Activated naive CD4-positive, alpha-beta T cell treated with anti-CD3 and anti-CD28 coated beads for 36 hours (primary cell): ENCODE measurements at regions of chr11 and their contacts with region 1.

Region 1: GRCh38 chr11:10307442-10308207 is 2.8 kb downstream of the ADM start:
- DNase-seq: peak; percentile 87
- H3K4me3 Mint-ChIP-seq: peak overlapping the region; percentile 81
- H3K27ac Mint-ChIP-seq: peak overlapping the region; percentile 59
- H3K4me1 Mint-ChIP-seq: peaks cover 33% of the 10 kb centered on the region
- H3K27me3 Mint-ChIP-seq: peaks cover 41% of the 10 kb centered on the region

Region 2: DNA sequence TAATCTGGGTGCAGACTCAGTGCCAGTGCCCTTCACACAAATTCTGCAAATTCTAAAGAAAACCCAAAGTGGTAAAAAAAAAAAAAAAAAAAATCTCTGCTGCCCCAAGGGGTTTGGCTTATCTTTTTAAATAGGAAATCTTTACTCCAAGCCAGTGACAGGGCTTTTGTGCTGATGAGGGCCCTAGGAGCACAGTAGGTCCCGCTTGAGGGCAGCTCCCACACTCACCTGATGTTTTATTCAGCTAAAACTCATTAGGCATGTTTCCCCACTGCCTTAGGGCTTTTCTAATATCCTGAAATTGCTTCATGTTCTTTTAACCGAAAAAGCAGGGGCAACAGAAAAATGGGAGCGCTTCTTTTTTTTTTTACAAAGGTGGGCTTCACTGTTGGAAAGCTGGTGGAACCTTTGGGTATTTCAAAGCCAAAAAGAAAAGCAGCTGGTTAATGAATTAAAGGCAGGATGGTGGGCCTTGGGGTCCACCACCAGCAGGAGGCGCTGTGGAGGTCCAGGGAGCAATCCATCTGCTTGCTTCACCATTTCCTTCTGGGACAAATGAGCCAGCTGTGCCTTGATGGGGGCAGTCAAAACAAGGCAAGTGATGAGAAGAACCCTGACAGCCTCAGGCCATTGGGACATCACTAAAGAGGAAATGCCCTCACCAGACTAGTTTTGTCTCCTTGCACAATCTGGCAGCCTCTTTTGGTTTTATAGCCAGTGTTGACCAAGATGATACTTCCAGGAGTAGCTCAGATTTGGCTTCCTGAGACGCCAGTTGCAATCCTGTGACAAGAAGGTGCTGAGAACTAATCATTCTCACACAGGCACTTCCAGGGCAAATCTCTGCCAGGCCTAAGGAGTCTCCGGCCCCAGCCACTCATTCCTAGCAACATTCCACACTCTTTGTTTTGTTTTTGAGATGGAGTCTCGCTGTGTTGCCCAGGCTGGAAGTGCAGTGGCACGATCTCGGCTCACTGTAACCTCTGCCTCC is 772.5 kb before region 1 on chr11:
- CTCF ChIA-PET with region 1: no interaction called
- intact Hi-C with region 1: loop called (anchors 5 kb)
- DNase-seq: peak; percentile 87
- H3K4me3 Mint-ChIP-seq: no peak overlapping the region
- H3K27ac Mint-ChIP-seq: no peak overlapping the region
- H3K4me1 Mint-ChIP-seq: no peaks in the 10 kb centered on the region
- H3K27me3 Mint-ChIP-seq: no peaks in the 10 kb centered on the region

Region 3: DNA sequence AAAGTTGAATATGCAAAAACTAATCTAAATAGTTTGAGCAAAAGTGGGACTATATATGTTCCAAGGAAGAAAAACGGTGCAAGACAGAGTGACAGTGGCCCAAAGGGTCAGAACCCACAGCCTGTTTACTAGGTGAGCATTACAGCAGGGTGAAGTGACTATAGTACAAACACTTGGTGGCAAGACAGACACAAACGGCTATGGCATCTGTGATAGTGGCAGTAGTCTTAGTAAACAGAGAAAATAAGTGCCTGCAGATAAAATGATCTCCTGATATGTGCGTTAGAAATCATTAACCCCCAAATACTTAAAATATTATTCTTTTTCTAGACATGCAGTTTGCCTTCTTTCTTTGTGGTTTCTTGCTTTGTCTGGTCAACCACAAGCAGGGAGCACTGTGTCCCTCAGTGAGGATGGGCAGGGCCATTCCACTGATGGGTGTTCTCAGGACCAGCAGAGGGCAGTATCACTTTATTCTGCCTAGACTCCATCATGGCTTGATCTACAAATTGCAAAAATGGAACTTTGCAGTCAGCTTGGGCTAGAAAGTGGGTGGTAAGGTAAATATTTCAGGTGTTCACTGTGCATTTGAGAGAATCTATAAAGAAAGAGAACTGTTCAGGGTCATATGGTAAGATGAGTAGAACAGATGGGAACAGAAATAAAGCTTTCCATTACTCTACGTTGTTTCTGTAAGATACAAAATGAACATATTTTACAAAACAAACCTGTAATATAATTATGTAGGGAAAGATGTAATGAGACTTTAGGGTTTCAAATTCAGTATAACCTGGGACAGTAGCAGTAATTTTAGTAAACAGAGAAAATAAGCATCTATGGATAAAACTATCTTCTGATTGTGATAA is 445.5 kb before region 1 on chr11:
- CTCF ChIA-PET with region 1: interaction called, 3 read pairs
- intact Hi-C with region 1: loop called (anchors 1 kb)
- DNase-seq: peak; percentile 71
- H3K4me3 Mint-ChIP-seq: no peak overlapping the region
- H3K27ac Mint-ChIP-seq: no peak overlapping the region
- H3K4me1 Mint-ChIP-seq: peaks cover 30% of the 10 kb centered on the region
- H3K27me3 Mint-ChIP-seq: no peaks in the 10 kb centered on the region

Region 4: GRCh38 chr11:10208131-10208575 is 99.5 kb before region 1 on chr11:
- CTCF ChIA-PET with region 1: interaction called, 102 read pairs
- intact Hi-C with region 1: loop called (anchors 1 kb)
- DNase-seq: no peak
- H3K4me3 Mint-ChIP-seq: no peak overlapping the region
- H3K27ac Mint-ChIP-seq: no peak overlapping the region
- H3K4me1 Mint-ChIP-seq: no peaks in the 10 kb centered on the region
- H3K27me3 Mint-ChIP-seq: no peaks in the 10 kb centered on the region

Region 5: GRCh38 chr11:10366568-10367370 is 59.1 kb after region 1 on chr11:
- CTCF ChIA-PET with region 1: interaction called, 7 read pairs
- intact Hi-C with region 1: loop called (anchors 1 kb)
- DNase-seq: peak; percentile 87
- H3K4me3 Mint-ChIP-seq: peak overlapping the region; percentile 7
- H3K27ac Mint-ChIP-seq: no peak overlapping the region
- H3K4me1 Mint-ChIP-seq: peaks cover 6% of the 10 kb centered on the region
- H3K27me3 Mint-ChIP-seq: peaks cover 9% of the 10 kb centered on the region

Region 6: GRCh38 chr11:10441652-10442503 is 134.3 kb after region 1 on chr11:
- CTCF ChIA-PET with region 1: no interaction called
- intact Hi-C with region 1: no loop called
- DNase-seq: no peak
- H3K4me3 Mint-ChIP-seq: no peak overlapping the region
- H3K27ac Mint-ChIP-seq: no peak overlapping the region
- H3K4me1 Mint-ChIP-seq: peaks cover 33% of the 10 kb centered on the region
- H3K27me3 Mint-ChIP-seq: no peaks in the 10 kb centered on the region